Mammary epithelial cell (primary cell): ENCODE measurements at regions of chr10 and their contacts with region 1.

Region 1: GRCh38 chr10:133329491-133330202 is 7.0 kb downstream of the CALY start:
- DNase-seq: peak; percentile 68
- H3K4me3 ChIP-seq: peak overlapping the region in 2 of 3 experiments; percentile 13 to 39
- H3K27ac ChIP-seq: no peak overlapping the region
- H3K4me1 ChIP-seq: peaks cover 16% of the 10 kb centered on the region
- H3K27me3 ChIP-seq: peaks cover 23% of the 10 kb centered on the region
- CTCF ChIP-seq: peak; percentile 80 to 96

Region 2: GRCh38 chr10:133124357-133125211 is 205.1 kb before region 1 on chr10:
- CTCF ChIA-PET with region 1: no interaction called
- dilution Hi-C with region 1: no loop called
- in situ Hi-C with region 1: no loop called
- intact Hi-C with region 1: no loop called
- DNase-seq: no peak
- H3K4me3 ChIP-seq: no peak overlapping the region
- H3K27ac ChIP-seq: no peak overlapping the region
- H3K4me1 ChIP-seq: no peaks in the 10 kb centered on the region
- H3K27me3 ChIP-seq: no peaks in the 10 kb centered on the region
- CTCF ChIP-seq: peak in 1 of 2 donors; percentile 31

Region 3: DNA sequence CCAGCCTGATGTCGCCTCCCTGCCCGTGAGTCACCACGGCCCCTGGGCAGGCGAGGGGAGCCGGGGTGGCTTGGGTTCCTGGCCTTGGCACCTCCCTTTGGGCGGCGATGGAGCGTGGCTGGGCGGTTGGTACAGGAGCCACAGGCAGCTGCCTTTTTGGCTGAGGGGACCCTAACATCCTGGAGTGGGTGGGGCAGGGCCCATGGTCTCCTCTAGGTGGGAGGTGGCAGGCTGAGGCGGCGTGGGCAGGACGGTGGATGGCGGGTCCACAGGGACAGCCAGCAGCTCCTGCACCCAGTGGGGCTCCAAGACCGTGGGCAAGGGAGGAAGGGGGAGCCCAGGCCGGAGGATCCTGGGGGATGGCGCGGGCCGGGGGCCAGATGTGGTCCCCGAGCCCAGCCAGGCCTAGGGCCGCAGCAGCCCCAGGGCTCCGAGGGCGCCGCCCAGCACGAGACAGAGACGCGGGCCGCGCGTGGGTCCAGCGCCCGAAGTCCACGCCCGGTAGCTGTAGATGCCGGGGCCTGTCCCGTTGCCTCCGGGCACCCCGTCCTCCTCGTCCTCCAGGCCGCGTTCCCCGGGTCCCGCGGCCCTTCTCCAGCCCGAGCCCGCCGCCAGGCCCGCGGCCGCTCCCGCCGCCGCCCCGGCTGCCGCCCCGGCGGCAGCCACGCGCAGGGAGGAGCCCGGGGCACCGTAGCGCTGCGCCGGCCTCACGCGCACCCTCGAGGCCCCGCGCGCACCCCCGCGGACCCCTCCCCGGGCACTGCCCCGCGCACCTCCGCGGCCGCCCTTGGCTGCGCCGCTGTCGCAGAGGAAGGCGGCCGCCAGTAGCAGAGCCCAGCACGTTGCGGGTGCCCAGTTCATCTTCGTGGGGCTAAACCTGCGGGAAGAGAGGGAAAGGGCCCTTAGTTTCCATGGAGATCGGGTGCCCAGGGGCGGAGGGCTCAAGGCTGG is 93.4 kb after region 1 on chr10:
- CTCF ChIA-PET with region 1: no interaction called
- dilution Hi-C with region 1: no loop called
- in situ Hi-C with region 1: no loop called
- intact Hi-C with region 1: loop called (anchors 10 kb)
- DNase-seq: no peak
- H3K4me3 ChIP-seq: peak overlapping the region in 1 of 3 experiments; percentile 18
- H3K27ac ChIP-seq: no peak overlapping the region
- H3K4me1 ChIP-seq: peaks cover 4% of the 10 kb centered on the region
- H3K27me3 ChIP-seq: no peaks in the 10 kb centered on the region
- CTCF ChIP-seq: no peak

Region 4: GRCh38 chr10:133520155-133520738 is 190.6 kb after region 1 on chr10:
- CTCF ChIA-PET with region 1: no interaction called
- dilution Hi-C with region 1: no loop called
- in situ Hi-C with region 1: no loop called
- intact Hi-C with region 1: loop called (anchors 5 kb)
- DNase-seq: peak; percentile 58
- H3K4me3 ChIP-seq: peak overlapping the region; percentile 35 to 60 (median 59)
- H3K27ac ChIP-seq: no peak overlapping the region
- H3K4me1 ChIP-seq: peaks cover 8% of the 10 kb centered on the region
- H3K27me3 ChIP-seq: peaks cover 2% of the 10 kb centered on the region
- CTCF ChIP-seq: peak; percentile 50 to 94